ENCODE measurements at regions of chr20 and their contacts with region 1.

Region 1: GRCh38 chr20:10040070-10040975 is 5.5 kb downstream of the ANKEF1 start:
- DNase-seq: peak; percentile 98
- ATAC-seq: peak; percentile 99
- H3K4me3 ChIP-seq: no peak overlapping the region
- H3K27ac ChIP-seq: peak overlapping the region; percentile 20; the same call in 1 of the 2 replicates
- H3K4me1 ChIP-seq: peaks cover 22% of the 10 kb centered on the region
- H3K27me3 ChIP-seq: no peaks in the 10 kb centered on the region
- CTCF ChIP-seq: no peak

Region 2: GRCh38 chr20:10090588-10091166 is 50.4 kb after region 1 on chr20:
- CTCF ChIA-PET with region 1: no interaction called
- POLR2A ChIA-PET with region 1: no interaction called
- intact Hi-C with region 1: loop called (anchors 2 kb)
- DNase-seq: peak; percentile 81
- ATAC-seq: peak; percentile 84
- H3K4me3 ChIP-seq: no peak overlapping the region
- H3K27ac ChIP-seq: no peak overlapping the region
- H3K4me1 ChIP-seq: peaks cover 19% of the 10 kb centered on the region
- H3K27me3 ChIP-seq: peaks cover 2% of the 10 kb centered on the region; the same call in 1 of the 2 replicates
- CTCF ChIP-seq: peak; percentile 93